Naive thymus-derived CD4-positive, alpha-beta T cell (primary cell): ENCODE measurements at regions of chr2 and their contacts with region 1.

Region 1: GRCh38 chr2:47906157-47907038 is at the start of gene FBXO11:
- DNase-seq: peak; percentile 80 to 99 (median 96)
- ATAC-seq: peak; percentile 90
- H3K4me3 ChIP-seq: peak within 1 kb of the TSS; percentile 77
- H3K4me3 Mint-ChIP-seq: peak within 1 kb of the TSS; percentile 78 to 97 (median 94)
- H3K27ac ChIP-seq: peak within 1 kb of the TSS; percentile 99
- H3K27ac Mint-ChIP-seq: peak within 1 kb of the TSS; percentile 68 to 97 (median 93)
- H3K4me1 ChIP-seq: peaks cover 14 to 20% of the 10 kb centered on the region in 2 donors
- H3K4me1 Mint-ChIP-seq: peaks cover 24 to 55% (median 51%) of the 10 kb centered on the region in 7 donors
- H3K27me3 ChIP-seq: no peaks in the 10 kb centered on the region
- H3K27me3 Mint-ChIP-seq: no peaks in the 10 kb centered on the region
- total RNA-seq, gene FBXO11: 54.6 to 92.1 (median 85.5) TPM

Region 2: GRCh38 chr2:47402805-47403608 is 503.4 kb before region 1 on chr2 and contains the start of gene MSH2:
- CTCF ChIA-PET with region 1: no interaction called
- POLR2A ChIA-PET with region 1: no interaction called
- intact Hi-C with region 1: loop called (anchors 1 to 10 kb)
- DNase-seq: peak; percentile 72 to 94 (median 91)
- ATAC-seq: peak; percentile 97
- H3K4me3 ChIP-seq: peak within 1 kb of the TSS; percentile 90
- H3K4me3 Mint-ChIP-seq: peak within 1 kb of the TSS; percentile 90 to 100 (median 98)
- H3K27ac ChIP-seq: peak within 1 kb of the TSS; percentile 77
- H3K27ac Mint-ChIP-seq: peak within 1 kb of the TSS; percentile 81 to 96 (median 91)
- H3K4me1 ChIP-seq: peaks cover 9 to 12% of the 10 kb centered on the region in 2 donors
- H3K4me1 Mint-ChIP-seq: peaks cover 32 to 49% (median 40%) of the 10 kb centered on the region in 7 donors
- H3K27me3 ChIP-seq: no peaks in the 10 kb centered on the region
- H3K27me3 Mint-ChIP-seq: peaks cover 0 to 2% (median 0%) of the 10 kb centered on the region in 5 donors
- total RNA-seq, gene MSH2: 12.2 to 44.7 (median 31.4) TPM

Region 3: DNA sequence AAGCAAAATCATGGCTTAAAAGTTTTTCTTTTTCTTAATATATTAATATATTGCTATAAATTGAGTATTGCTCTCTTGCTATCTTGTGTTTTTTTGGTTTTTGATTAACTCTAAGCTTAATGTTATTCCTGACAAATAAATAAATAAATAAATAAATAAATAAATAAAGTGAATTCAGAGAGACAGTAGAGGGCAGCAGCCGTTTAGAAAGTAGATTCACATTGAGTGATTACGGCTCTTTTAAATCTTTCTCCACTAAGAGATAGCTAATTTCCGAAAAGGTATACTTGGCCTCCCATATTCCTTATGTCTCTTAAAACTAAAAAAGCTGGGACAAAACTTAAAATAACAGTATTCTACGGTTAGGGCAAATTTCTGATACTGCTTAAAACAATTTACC is 469.1 kb before region 1 on chr2:
- CTCF ChIA-PET with region 1: no interaction called
- POLR2A ChIA-PET with region 1: no interaction called
- intact Hi-C with region 1: no loop called
- DNase-seq: no peak
- ATAC-seq: no peak
- H3K4me3 ChIP-seq: no peak overlapping the region
- H3K4me3 Mint-ChIP-seq: no peak overlapping the region
- H3K27ac ChIP-seq: no peak overlapping the region
- H3K27ac Mint-ChIP-seq: no peak overlapping the region
- H3K4me1 ChIP-seq: no peaks in the 10 kb centered on the region
- H3K4me1 Mint-ChIP-seq: peaks cover 0 to 3% (median 0%) of the 10 kb centered on the region in 7 donors
- H3K27me3 ChIP-seq: no peaks in the 10 kb centered on the region
- H3K27me3 Mint-ChIP-seq: no peaks in the 10 kb centered on the region

Region 4: DNA sequence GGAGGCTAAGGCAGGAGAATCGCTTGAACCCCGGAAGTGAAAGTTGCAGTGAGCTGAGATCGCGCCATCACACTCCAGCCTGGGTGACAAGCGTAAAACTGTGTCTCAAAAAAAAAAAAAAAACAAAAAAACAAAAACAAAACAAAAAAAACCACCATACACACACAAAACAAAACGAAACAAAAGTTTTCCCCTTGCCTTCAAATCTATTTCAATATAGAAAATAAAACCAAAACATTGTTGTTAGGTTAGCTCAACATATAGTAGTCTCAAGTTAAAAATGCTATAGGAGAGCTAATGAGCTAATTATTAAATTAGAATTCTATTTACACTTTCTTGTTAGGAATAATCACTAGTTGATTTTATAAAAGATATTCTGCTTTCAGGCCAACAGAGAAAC is 43.4 kb before region 1 on chr2:
- CTCF ChIA-PET with region 1: interaction called, 5 read pairs
- POLR2A ChIA-PET with region 1: interaction called, 5 read pairs
- intact Hi-C with region 1: loop called (anchors 1 kb)
- DNase-seq: no peak
- ATAC-seq: no peak
- H3K4me3 ChIP-seq: no peak overlapping the region
- H3K4me3 Mint-ChIP-seq: no peak overlapping the region
- H3K27ac ChIP-seq: no peak overlapping the region
- H3K27ac Mint-ChIP-seq: peak overlapping the region in 6 of 9 donors; percentile 1 to 61 (median 26)
- H3K4me1 ChIP-seq: peaks cover 0 to 15% of the 10 kb centered on the region in 2 donors
- H3K4me1 Mint-ChIP-seq: peaks cover 25 to 87% (median 76%) of the 10 kb centered on the region in 7 donors
- H3K27me3 ChIP-seq: no peaks in the 10 kb centered on the region
- H3K27me3 Mint-ChIP-seq: no peaks in the 10 kb centered on the region

Region 5: DNA sequence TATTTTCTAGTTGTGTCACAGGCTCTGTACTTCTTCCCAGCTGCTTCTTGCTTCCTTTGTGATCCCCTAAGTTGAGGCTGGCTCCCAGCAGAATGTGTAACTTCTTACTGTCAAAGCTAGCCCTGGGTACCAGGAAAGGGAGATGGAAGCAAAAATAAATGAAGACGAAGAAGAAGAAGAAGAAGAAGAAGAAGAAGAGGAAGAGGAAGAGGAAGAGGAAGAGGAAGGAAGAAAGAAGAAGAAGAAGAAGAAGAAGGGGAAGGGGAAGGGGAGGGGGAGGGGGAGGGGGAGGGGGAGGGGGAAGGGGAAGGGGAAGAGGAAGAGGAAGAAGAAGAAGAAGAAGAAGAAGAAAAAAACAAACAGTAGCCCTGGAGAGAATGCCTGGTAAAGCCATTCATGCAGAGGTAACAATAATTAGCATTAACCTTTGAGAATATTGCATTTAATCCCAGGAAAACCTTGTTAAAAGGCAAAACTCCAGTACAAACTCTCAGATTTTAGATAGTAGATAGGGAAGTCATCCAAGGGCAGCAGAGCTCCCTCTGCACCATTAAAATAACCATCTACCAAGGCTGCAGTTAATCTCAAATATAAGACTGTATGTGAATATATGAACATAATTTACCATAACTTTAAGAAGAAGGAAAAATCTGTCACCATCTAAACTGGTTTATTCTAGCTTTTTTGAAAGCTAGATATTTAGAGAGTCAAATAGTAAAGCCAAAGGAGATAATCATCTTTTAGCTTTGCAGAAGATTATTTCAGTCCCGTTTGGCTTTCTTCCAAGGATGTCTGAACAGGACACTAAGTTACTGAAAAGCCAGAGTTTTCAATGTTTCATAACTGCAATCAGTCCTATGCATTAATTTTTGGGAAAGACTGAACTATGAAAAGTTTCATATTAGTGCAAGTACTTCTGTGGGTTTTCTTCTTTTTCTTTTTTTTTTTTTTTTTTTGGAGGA is 44.2 kb after region 1 on chr2:
- CTCF ChIA-PET with region 1: no interaction called
- POLR2A ChIA-PET with region 1: no interaction called
- intact Hi-C with region 1: loop called in 1 of 2 experiments (anchors 5 kb)
- DNase-seq: no peak
- ATAC-seq: no peak
- H3K4me3 ChIP-seq: no peak overlapping the region
- H3K4me3 Mint-ChIP-seq: no peak overlapping the region
- H3K27ac ChIP-seq: no peak overlapping the region
- H3K27ac Mint-ChIP-seq: no peak overlapping the region
- H3K4me1 ChIP-seq: no peaks in the 10 kb centered on the region
- H3K4me1 Mint-ChIP-seq: peaks cover 0 to 4% (median 0%) of the 10 kb centered on the region in 7 donors
- H3K27me3 ChIP-seq: no peaks in the 10 kb centered on the region
- H3K27me3 Mint-ChIP-seq: peaks cover 0 to 9% (median 5%) of the 10 kb centered on the region in 5 donors

Region 6: DNA sequence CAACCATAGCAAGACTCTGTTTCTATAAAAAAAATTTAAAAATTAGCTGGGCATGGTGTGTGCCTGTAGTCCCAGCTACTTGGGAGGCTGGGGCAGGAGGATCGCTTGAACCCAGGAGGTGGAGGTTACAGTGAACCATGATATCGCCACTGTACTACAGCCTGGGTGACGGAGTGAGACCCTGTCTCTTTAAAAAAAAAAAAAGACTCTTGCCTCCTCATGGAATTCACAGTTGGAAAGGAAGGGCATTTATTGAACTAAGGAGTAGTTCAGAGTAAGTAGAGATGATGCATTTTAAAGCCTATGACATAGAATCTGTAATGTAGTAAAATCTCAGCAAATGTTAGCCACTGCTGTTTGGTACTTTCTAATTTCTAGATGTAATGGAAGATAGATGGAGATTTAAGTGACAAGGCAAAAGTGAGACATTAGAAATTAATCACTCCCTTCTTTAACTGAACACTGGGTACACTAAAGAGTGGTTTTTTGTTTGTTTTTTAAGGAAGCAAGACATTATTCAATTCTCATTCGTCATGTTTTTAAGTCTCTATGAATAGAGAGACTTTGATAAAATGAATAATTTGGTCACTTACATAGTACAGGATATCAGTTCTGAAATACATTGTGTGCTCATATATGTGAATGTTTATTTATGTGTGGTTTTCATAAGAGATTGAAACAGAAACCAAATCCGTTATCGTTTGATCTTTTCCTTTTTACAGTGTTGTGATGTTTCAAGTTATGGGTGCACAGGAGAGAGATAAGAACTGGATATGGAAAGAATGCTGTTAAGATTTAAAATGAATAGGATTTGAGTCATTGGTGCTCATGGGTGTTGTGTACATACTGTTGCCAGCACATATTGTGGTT is 437.4 kb after region 1 on chr2:
- CTCF ChIA-PET with region 1: no interaction called
- POLR2A ChIA-PET with region 1: no interaction called
- intact Hi-C with region 1: loop called in 1 of 2 experiments (anchors 1 kb)
- DNase-seq: peak in 7 of 9 donors; percentile 36 to 74 (median 64)
- ATAC-seq: peak; percentile 86
- H3K4me3 ChIP-seq: peak overlapping the region; percentile 47
- H3K4me3 Mint-ChIP-seq: peak overlapping the region; percentile 31 to 85 (median 69)
- H3K27ac ChIP-seq: peak overlapping the region; percentile 36
- H3K27ac Mint-ChIP-seq: peak overlapping the region; percentile 57 to 89 (median 79)
- H3K4me1 ChIP-seq: peaks cover 13 to 23% of the 10 kb centered on the region in 2 donors
- H3K4me1 Mint-ChIP-seq: peaks cover 20 to 80% (median 57%) of the 10 kb centered on the region in 7 donors
- H3K27me3 ChIP-seq: no peaks in the 10 kb centered on the region
- H3K27me3 Mint-ChIP-seq: no peaks in the 10 kb centered on the region